PC-9 (cell line): ENCODE measurements at regions of chr7 and their contacts with region 1.

Region 1: DNA sequence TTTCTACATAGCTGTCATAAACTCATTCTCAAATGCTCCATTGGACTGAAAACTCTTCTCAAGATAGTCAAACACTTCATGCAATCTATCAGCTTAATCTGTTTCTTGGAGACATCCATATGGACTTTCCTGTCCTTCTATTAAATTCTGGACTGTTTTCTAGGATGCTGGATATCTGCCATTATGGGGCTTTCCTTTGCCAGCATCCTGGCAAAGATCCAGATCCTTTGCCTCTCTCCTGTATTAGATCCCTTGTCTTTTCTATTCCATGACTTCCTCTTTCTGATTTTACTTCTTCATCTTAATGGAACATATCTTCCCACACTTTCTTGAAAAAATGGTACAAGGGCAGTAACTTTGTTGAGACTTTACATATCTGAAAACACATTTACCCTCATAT is 35.9 kb upstream of the SKAP2 start:
- DNase-seq: no peak
- H3K4me3 ChIP-seq: no peak overlapping the region
- H3K27ac ChIP-seq: no peak overlapping the region
- H3K4me1 ChIP-seq: no peaks in the 10 kb centered on the region
- H3K27me3 ChIP-seq: no peaks in the 10 kb centered on the region
- CTCF ChIP-seq: no peak

Region 2: GRCh38 chr7:26879671-26880070 is 20.6 kb before region 1 on chr7:
- CTCF ChIA-PET with region 1: no interaction called
- POLR2A ChIA-PET with region 1: interaction called, 3 read pairs
- intact Hi-C with region 1: loop called (anchors 1 kb)
- DNase-seq: no peak
- H3K4me3 ChIP-seq: no peak overlapping the region
- H3K27ac ChIP-seq: no peak overlapping the region
- H3K4me1 ChIP-seq: peaks cover 15% of the 10 kb centered on the region
- H3K27me3 ChIP-seq: no peaks in the 10 kb centered on the region
- CTCF ChIP-seq: no peak

Region 3: GRCh38 chr7:27062946-27063345 is 162.7 kb after region 1 on chr7:
- CTCF ChIA-PET with region 1: no interaction called
- POLR2A ChIA-PET with region 1: no interaction called
- intact Hi-C with region 1: no loop called
- DNase-seq: no peak
- H3K4me3 ChIP-seq: no peak overlapping the region
- H3K27ac ChIP-seq: no peak overlapping the region
- H3K4me1 ChIP-seq: peaks cover 41% of the 10 kb centered on the region
- H3K27me3 ChIP-seq: no peaks in the 10 kb centered on the region
- CTCF ChIP-seq: no peak